Activated CD8-positive, alpha-beta T cell treated with anti-CD3 and anti-CD28 coated beads, Interleukin-2, amount 10 ng/mL, durations not matched to agents 7 days and 5 days (primary cell): ENCODE measurements at regions of chr6 and their contacts with region 1.

Region 1: GRCh38 chr6:27177485-27178406 is 69.8 kb upstream of the PRSS16 start:
- DNase-seq: peak; percentile 84
- ATAC-seq: peak; percentile 88
- H3K4me3 Mint-ChIP-seq: peak overlapping the region; percentile 92
- H3K27ac Mint-ChIP-seq: peak overlapping the region; percentile 81
- H3K4me1 Mint-ChIP-seq: peaks cover 17% of the 10 kb centered on the region
- H3K27me3 Mint-ChIP-seq: peaks cover 30% of the 10 kb centered on the region

Region 2: GRCh38 chr6:27157459-27158315 is 20.1 kb before region 1 on chr6:
- CTCF ChIA-PET with region 1: interaction called, 54 read pairs
- POLR2A ChIA-PET with region 1: interaction called, 4 read pairs
- DNase-seq: peak; percentile 87
- ATAC-seq: peak; percentile 79
- H3K4me3 Mint-ChIP-seq: peak overlapping the region; percentile 80
- H3K27ac Mint-ChIP-seq: peak overlapping the region; percentile 75
- H3K4me1 Mint-ChIP-seq: peaks cover 53% of the 10 kb centered on the region
- H3K27me3 Mint-ChIP-seq: no peaks in the 10 kb centered on the region

Region 3: DNA sequence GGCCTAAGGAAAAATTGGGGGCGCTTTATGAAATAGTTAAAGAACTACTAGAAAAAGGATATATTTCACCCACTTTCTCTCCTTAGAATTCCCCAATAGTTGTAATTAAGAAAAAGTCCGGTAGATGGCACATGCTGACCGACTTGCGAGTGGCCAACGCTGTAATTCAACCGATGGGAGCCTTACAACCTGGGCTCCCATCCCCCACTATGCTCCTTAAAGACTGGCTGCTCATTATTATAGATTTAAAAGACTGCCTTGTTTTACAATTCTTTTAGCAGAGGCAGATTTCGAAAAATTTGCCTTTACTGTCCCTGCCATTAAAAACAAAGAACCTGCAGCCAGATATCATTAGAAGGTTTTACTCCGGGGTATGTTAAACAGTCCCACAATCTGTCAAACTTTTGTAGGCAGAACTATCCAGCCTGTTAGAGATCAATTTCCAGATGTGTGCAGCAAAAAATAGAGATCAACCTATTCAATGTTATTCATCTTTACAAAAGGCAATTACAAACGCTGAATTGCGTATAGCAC is 11.2 kb after region 1 on chr6:
- CTCF ChIA-PET with region 1: interaction called, 28 read pairs
- POLR2A ChIA-PET with region 1: interaction called, 7 read pairs
- DNase-seq: peak; percentile 69
- ATAC-seq: peak; percentile 90
- H3K4me3 Mint-ChIP-seq: peak overlapping the region; percentile 84
- H3K27ac Mint-ChIP-seq: peak overlapping the region; percentile 50
- H3K4me1 Mint-ChIP-seq: peaks cover 16% of the 10 kb centered on the region
- H3K27me3 Mint-ChIP-seq: no peaks in the 10 kb centered on the region

Region 4: DNA sequence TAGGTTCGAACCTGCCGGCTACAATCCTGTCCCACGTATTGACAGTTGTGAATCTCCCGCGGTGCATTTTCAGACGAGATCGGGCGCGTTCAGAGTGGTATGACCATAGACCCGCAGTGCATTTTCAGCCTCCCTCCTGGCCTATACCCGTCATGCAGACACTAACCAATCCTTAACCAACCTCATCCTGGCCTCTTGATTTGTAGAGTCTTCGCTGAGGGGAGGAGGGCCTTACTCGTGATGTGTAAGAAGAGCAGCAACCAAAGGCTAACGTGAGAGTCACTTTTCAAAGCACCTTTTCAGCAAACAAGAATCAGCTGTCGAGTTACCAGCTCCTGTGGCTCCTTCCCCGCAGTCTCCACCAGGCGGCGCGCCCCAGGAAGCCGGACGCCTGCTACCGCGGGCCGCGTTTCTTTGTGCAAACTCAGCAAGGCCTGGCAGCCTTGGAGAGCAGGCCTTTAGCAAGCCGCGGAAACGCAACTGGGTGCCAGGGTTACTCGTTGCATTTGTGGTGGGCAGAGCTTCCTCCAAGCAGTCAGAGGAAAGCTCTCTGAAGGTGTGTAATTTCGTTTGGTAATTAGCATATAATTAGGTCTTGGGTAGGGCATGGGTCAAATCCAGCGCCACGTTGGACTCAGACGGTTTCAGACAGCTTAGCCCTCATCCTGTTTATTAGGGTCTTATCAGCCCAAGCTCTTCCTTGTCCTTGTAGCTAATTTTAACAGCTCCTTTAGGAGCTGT is 594.7 kb after region 1 on chr6:
- CTCF ChIA-PET with region 1: interaction called, 14 read pairs
- POLR2A ChIA-PET with region 1: no interaction called
- DNase-seq: peak; percentile 93
- ATAC-seq: peak; percentile 100
- H3K4me3 Mint-ChIP-seq: no peak overlapping the region
- H3K27ac Mint-ChIP-seq: peak overlapping the region; percentile 8
- H3K4me1 Mint-ChIP-seq: peaks cover 22% of the 10 kb centered on the region
- H3K27me3 Mint-ChIP-seq: peaks cover 20% of the 10 kb centered on the region

Region 5: DNA sequence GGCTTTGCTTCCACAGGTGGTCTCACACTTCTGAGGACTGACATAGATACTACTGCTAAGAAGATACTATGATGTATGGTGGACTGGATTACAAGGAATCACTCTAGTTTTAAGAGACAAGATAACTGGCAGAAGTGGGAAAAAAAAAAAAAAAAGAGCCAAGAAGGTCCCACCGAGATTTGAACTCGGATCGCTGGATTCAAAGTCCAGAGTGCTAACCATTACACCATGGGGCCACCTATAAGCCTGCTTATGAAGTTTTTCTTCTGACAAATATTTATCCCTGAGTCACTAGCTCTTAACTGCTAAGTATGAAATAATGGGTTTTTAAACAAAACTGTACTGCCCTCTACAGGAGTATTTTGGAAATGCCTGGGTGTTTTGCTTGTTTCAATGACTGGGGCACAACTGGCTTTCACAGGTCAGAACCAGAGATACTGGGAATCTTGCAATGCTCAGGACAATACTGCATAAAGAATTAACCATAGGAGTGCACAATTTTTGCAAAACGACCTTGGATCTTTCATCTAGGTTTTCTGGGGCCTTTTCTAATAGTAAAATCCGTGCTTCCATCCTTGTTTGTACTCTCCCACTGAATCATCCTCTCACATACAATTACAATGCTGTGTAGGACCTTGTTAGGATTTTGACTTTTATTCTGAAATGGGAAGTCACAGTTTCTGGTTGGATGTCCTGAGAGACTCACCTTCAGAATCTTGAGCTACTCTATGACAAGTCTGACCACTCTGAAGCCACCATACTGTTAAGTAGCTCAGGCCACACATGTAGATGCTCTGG is 618.1 kb after region 1 on chr6:
- CTCF ChIA-PET with region 1: interaction called, 20 read pairs
- POLR2A ChIA-PET with region 1: no interaction called
- DNase-seq: peak; percentile 83
- ATAC-seq: peak; percentile 52
- H3K4me3 Mint-ChIP-seq: peak overlapping the region; percentile 1
- H3K27ac Mint-ChIP-seq: no peak overlapping the region
- H3K4me1 Mint-ChIP-seq: peaks cover 49% of the 10 kb centered on the region
- H3K27me3 Mint-ChIP-seq: peaks cover 13% of the 10 kb centered on the region